ENCODE measurements at regions of chr1 and their contacts with region 1.

Region 1: GRCh38 chr1:108643492-108644335 is 17.2 kb downstream of the HENMT1 start:
- DNase-seq: peak; percentile 49
- H3K4me3 Mint-ChIP-seq: no peak overlapping the region
- H3K27ac Mint-ChIP-seq: peak overlapping the region; percentile 95
- H3K4me1 Mint-ChIP-seq: peaks cover 61% of the 10 kb centered on the region
- H3K27me3 Mint-ChIP-seq: no peaks in the 10 kb centered on the region

Region 2: GRCh38 chr1:107782217-107782845 is 861.4 kb before region 1 on chr1:
- CTCF ChIA-PET with region 1: interaction called, 6 read pairs
- POLR2A ChIA-PET with region 1: no interaction called
- intact Hi-C with region 1: loop called (anchors 10 kb)
- DNase-seq: no peak
- H3K4me3 Mint-ChIP-seq: no peak overlapping the region
- H3K27ac Mint-ChIP-seq: no peak overlapping the region
- H3K4me1 Mint-ChIP-seq: peaks cover 24% of the 10 kb centered on the region
- H3K27me3 Mint-ChIP-seq: no peaks in the 10 kb centered on the region

Region 3: GRCh38 chr1:108503076-108503740 is 140.5 kb before region 1 on chr1:
- CTCF ChIA-PET with region 1: interaction called, 18 read pairs
- POLR2A ChIA-PET with region 1: no interaction called
- intact Hi-C with region 1: loop called (anchors 2 kb)
- DNase-seq: no peak
- H3K4me3 Mint-ChIP-seq: no peak overlapping the region
- H3K27ac Mint-ChIP-seq: no peak overlapping the region
- H3K4me1 Mint-ChIP-seq: peaks cover 1% of the 10 kb centered on the region
- H3K27me3 Mint-ChIP-seq: peaks cover 22% of the 10 kb centered on the region

Region 4: DNA sequence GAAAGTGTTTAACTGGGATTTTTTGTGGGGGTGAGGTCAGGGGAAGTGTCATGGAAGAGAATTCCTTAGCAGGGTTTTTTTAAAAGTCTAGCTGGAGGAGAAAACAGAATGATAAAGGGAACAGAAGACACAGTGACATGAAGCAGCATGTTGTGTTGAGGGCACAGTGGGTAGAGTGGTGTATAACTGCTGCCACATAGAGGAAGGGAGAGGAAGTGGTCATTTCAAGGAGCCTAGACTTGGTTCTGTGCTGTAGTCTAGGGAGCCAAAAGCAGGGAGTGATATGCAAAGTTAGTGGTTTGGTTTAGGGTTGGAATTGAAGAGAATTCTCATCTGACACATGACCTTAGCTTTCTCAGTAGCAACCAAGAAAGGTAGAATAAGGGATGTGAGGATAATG is 73.6 kb before region 1 on chr1:
- CTCF ChIA-PET with region 1: interaction called, 15 read pairs
- POLR2A ChIA-PET with region 1: no interaction called
- intact Hi-C with region 1: no loop called
- DNase-seq: peak; percentile 37
- H3K4me3 Mint-ChIP-seq: no peak overlapping the region
- H3K27ac Mint-ChIP-seq: no peak overlapping the region
- H3K4me1 Mint-ChIP-seq: no peaks in the 10 kb centered on the region
- H3K27me3 Mint-ChIP-seq: no peaks in the 10 kb centered on the region

Region 5: DNA sequence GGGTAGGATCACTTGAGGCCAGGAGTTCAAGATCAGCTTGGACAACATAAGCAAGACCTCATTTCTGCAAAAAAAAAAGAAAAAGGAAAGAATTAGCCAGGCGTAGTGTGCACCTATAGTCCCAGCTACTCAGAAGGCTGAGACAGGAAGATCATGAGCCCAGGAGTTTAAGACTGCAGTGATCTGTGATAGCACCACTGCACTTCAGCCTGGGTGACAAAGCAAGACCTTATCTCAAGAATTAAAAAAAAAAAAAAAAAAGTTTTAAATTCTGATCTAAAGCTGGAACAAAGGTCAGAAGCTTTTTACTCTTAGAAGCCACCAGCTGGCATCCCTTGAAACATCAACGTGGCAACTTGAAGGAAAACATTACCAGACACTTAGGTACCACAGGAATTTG is 28.2 kb before region 1 on chr1:
- CTCF ChIA-PET with region 1: interaction called, 10 read pairs
- POLR2A ChIA-PET with region 1: no interaction called
- intact Hi-C with region 1: no loop called
- DNase-seq: no peak
- H3K4me3 Mint-ChIP-seq: no peak overlapping the region
- H3K27ac Mint-ChIP-seq: no peak overlapping the region
- H3K4me1 Mint-ChIP-seq: no peaks in the 10 kb centered on the region
- H3K27me3 Mint-ChIP-seq: no peaks in the 10 kb centered on the region

Region 6: DNA sequence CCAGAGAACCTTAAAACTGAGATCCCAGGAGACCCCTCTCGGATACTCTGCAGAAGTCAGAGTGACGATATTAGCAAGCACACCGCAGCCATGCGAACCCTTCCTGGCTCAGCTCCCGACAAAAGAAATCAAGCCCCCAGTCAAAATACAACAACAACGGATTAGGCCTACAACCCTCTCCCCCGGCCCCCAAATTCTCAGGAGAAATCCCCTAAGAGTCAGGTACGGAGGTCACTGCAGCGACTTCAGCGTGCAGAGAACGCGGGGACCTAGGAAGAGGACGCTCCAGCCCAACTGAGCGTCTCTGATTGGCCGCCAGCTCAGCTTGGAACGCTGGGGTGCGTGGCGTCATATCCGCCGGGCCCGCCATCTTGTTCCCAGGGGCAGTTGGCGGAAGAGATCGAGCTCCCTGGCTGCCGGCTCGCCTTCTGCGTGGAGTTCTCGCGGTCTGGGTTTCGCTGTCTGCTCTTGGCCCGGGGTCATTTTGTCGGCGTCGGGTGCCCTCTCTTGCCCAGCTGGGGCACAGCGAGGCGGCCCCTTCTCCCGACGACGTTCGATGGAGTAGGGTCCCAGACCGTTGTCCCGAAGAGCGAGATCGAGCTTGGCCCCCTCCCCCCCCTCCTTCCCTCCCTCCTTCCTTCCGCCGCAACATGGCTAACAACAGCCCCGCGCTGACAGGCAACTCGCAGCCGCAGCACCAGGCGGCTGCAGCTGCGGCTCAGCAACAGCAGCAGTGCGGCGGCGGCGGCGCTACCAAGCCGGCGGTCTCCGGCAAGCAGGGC is 48.4 kb after region 1 on chr1 and contains the start of gene PRPF38B:
- CTCF ChIA-PET with region 1: interaction called, 31 read pairs
- POLR2A ChIA-PET with region 1: interaction called, 29 read pairs
- intact Hi-C with region 1: loop called (anchors 1 kb)
- DNase-seq: peak; percentile 97
- H3K4me3 Mint-ChIP-seq: peak within 1 kb of the TSS; percentile 96
- H3K27ac Mint-ChIP-seq: peak within 1 kb of the TSS; percentile 99
- H3K4me1 Mint-ChIP-seq: peaks cover 37% of the 10 kb centered on the region
- H3K27me3 Mint-ChIP-seq: no peaks in the 10 kb centered on the region
- total RNA-seq, gene PRPF38B: 57.0 to 63.5 TPM

Region 7: DNA sequence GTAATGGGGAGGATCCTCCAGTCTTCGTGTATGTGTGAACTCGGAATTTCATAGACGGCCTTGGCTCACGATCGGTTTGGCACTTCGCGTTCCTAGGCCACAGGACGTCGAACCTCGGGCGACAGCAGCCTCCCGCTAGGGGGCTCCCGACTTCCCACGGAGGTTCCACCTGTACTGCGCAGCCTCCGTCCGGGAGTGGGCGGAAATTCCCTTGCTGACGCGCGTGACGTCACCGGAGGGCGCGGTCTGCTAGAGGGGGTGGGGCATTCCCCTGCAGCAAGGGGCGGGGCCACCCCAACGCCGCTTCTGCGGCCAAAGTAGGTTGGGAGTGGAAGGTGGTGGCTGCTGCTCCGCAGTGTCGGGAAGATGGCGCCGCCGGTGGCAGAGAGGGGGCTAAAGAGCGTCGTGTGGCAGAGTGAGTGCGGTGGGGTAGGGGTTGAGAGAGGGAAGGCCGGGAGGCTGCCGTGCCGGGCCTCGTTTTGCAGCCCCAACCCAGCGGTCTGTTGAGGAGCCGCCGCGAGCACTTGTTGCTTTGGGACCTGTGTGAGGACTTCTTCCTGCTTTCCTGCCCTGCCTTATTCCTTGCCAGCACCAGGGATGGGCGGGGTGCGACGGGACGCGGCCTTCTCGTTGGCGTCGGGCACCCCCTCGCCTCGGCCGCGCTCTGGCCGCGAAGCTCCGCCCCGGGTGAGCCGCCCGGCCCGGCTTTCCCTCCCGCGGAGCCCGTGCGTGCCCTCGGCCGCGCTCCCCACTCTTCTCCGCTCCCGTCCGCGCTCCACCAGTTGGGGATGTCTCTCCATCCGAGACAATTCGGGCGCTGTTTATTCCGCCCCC is 102.9 kb after region 1 on chr1 and contains the start of gene STXBP3:
- CTCF ChIA-PET with region 1: no interaction called
- POLR2A ChIA-PET with region 1: no interaction called
- intact Hi-C with region 1: loop called (anchors 1 kb)
- DNase-seq: peak; percentile 100
- H3K4me3 Mint-ChIP-seq: peak within 1 kb of the TSS; percentile 95
- H3K27ac Mint-ChIP-seq: peak within 1 kb of the TSS; percentile 97
- H3K4me1 Mint-ChIP-seq: peaks cover 28% of the 10 kb centered on the region
- H3K27me3 Mint-ChIP-seq: no peaks in the 10 kb centered on the region
- total RNA-seq, gene STXBP3: 40.8 to 46.8 TPM